K562 (cell line): ENCODE measurements at regions of chr17 and their contacts with region 1.

Region 1: GRCh38 chr17:78677303-78678221 is 100.4 kb upstream of the DNAH17 start:
- DNase-seq: no peak
- ATAC-seq: no peak
- H3K4me3 ChIP-seq: no peak overlapping the region
- H3K27ac ChIP-seq: no peak overlapping the region
- H3K4me1 ChIP-seq: peaks cover 0 to 11% of the 10 kb centered on the region in 2 experiments; a peak in 1 of 5 replicates
- H3K27me3 ChIP-seq: no peaks in the 10 kb centered on the region
- CTCF ChIP-seq: no peak
- EP300 ChIP-seq: no peak
- POLR2A ChIP-seq: no peak
- RAD21 ChIP-seq: no peak

Region 2: GRCh38 chr17:78665952-78666920 is 11.3 kb before region 1 on chr17:
- CTCF ChIA-PET with region 1: no interaction called
- POLR2A ChIA-PET with region 1: interaction called, 11 read pairs
- in situ Hi-C with region 1: no loop called
- intact Hi-C with region 1: no loop called
- DNase-seq: peak; percentile 81 to 97 (median 88)
- ATAC-seq: peak; percentile 97
- H3K4me3 ChIP-seq: no peak overlapping the region
- H3K27ac ChIP-seq: peak overlapping the region; percentile 74; the same call in 2 of the 3 replicates
- H3K4me1 ChIP-seq: peaks cover 25 to 26% of the 10 kb centered on the region in 2 experiments
- H3K27me3 ChIP-seq: peaks cover 6 to 19% of the 10 kb centered on the region in 2 experiments; a peak in 3 of 5 replicates
- CTCF ChIP-seq: no peak
- EP300 ChIP-seq: peak; percentile 98
- POLR2A ChIP-seq: no peak
- RAD21 ChIP-seq: peak in 1 of 2 experiments; percentile 28; a peak in 2 of 4 replicates